Prostate gland (tissue), 2 donors: ENCODE measurements at regions of chr1 and their contacts with region 1.

Region 1: DNA sequence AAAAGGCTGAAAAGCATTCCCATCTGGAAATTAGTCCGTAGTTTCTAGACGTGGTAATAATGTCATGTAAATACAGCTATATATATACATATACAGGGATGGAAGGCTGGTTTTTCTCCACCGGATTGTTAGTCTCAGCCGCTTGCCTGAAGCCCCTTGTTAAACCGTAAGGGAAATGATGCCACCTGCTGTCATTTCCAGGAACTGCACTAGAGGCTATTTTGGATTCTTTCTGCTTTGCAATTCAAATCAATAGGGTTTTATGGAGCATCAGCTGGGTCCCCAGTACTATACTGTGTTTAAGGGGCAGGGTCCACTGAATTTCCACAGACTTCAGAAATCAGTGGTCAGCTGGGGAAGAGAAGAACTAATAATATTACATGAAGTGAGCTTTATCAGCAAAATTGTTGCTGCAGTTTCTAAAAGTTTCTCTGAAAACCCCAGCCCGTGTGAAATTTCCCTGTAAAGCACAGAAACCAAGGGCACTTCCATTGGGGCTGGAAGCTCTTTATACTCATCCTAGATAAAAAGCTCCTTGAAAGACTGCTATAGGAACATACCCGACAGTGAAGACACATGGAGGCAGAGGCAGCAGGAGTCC is 33.8 kb upstream of the MPZL1 start:
- DNase-seq: peak; percentile 81
- H3K4me3 ChIP-seq: no peak overlapping the region
- H3K27ac ChIP-seq: no peak overlapping the region
- H3K4me1 ChIP-seq: peaks cover 5% of the 10 kb centered on the region
- H3K27me3 ChIP-seq: no peaks in the 10 kb centered on the region
- CTCF ChIP-seq: peak; percentile 73 to 88 (median 86)
- POLR2A ChIP-seq: no peak

Region 2: GRCh38 chr1:167297222-167298214 is 390.5 kb before region 1 on chr1:
- intact Hi-C with region 1: no loop called
- DNase-seq: no peak
- H3K4me3 ChIP-seq: no peak overlapping the region
- H3K27ac ChIP-seq: no peak overlapping the region
- H3K4me1 ChIP-seq: no peaks in the 10 kb centered on the region
- H3K27me3 ChIP-seq: no peaks in the 10 kb centered on the region
- CTCF ChIP-seq: no peak
- POLR2A ChIP-seq: no peak

Region 3: GRCh38 chr1:167601442-167602383 is 86.3 kb before region 1 on chr1:
- intact Hi-C with region 1: loop called (anchors 2 kb)
- DNase-seq: no peak
- H3K4me3 ChIP-seq: no peak overlapping the region
- H3K27ac ChIP-seq: no peak overlapping the region
- H3K4me1 ChIP-seq: no peaks in the 10 kb centered on the region
- H3K27me3 ChIP-seq: no peaks in the 10 kb centered on the region
- CTCF ChIP-seq: no peak
- POLR2A ChIP-seq: no peak

Region 4: GRCh38 chr1:167629681-167630567 is 58.1 kb before region 1 on chr1 and contains the start of gene RCSD1:
- intact Hi-C with region 1: loop called (anchors 10 kb)
- DNase-seq: no peak
- H3K4me3 ChIP-seq: peak within 1 kb of the TSS; percentile 37 to 45
- H3K27ac ChIP-seq: peak within 1 kb of the TSS; percentile 41 to 61
- H3K4me1 ChIP-seq: no peaks in the 10 kb centered on the region
- H3K27me3 ChIP-seq: no peaks in the 10 kb centered on the region
- CTCF ChIP-seq: no peak
- POLR2A ChIP-seq: no peak
- total RNA-seq, gene RCSD1: 2.8 to 13.8 TPM

Region 5: GRCh38 chr1:167909631-167910180 is 221.7 kb after region 1 on chr1:
- intact Hi-C with region 1: no loop called
- DNase-seq: no peak
- H3K4me3 ChIP-seq: no peak overlapping the region
- H3K27ac ChIP-seq: no peak overlapping the region
- H3K4me1 ChIP-seq: peaks cover 7% of the 10 kb centered on the region
- H3K27me3 ChIP-seq: no peaks in the 10 kb centered on the region
- CTCF ChIP-seq: no peak
- POLR2A ChIP-seq: no peak